ENCODE measurements at regions of chr1 and their contacts with region 1.

Region 1: GRCh38 chr1:224356685-224357625 is at the start of gene CNIH4:
- DNase-seq: peak; percentile 88
- ATAC-seq: peak; percentile 99
- H3K4me3 Mint-ChIP-seq: peak within 1 kb of the TSS; percentile 88
- H3K27ac Mint-ChIP-seq: peak within 1 kb of the TSS; percentile 86
- H3K4me1 Mint-ChIP-seq: peaks cover 34% of the 10 kb centered on the region
- H3K27me3 Mint-ChIP-seq: no peaks in the 10 kb centered on the region
- total RNA-seq, gene CNIH4: 42.3 to 43.1 TPM

Region 2: GRCh38 chr1:224377676-224378006 is 20.7 kb after region 1 on chr1:
- POLR2A ChIA-PET with region 1: interaction called, 28 read pairs
- DNase-seq: no peak
- ATAC-seq: peak; percentile 53
- H3K4me3 Mint-ChIP-seq: peak overlapping the region; percentile 43
- H3K27ac Mint-ChIP-seq: peak overlapping the region; percentile 90
- H3K4me1 Mint-ChIP-seq: peaks cover 82% of the 10 kb centered on the region
- H3K27me3 Mint-ChIP-seq: no peaks in the 10 kb centered on the region

Region 3: GRCh38 chr1:224434691-224435317 is 77.8 kb after region 1 on chr1 and contains the start of gene WDR26:
- POLR2A ChIA-PET with region 1: interaction called, 17 read pairs
- DNase-seq: peak; percentile 84
- ATAC-seq: peak; percentile 88
- H3K4me3 Mint-ChIP-seq: peak within 1 kb of the TSS; percentile 94
- H3K27ac Mint-ChIP-seq: peak within 1 kb of the TSS; percentile 97
- H3K4me1 Mint-ChIP-seq: peaks cover 45% of the 10 kb centered on the region
- H3K27me3 Mint-ChIP-seq: no peaks in the 10 kb centered on the region
- total RNA-seq, gene WDR26: 90.2 to 92.0 TPM

Region 4: GRCh38 chr1:224592636-224593582 is 236.0 kb after region 1 on chr1:
- POLR2A ChIA-PET with region 1: no interaction called
- DNase-seq: no peak
- ATAC-seq: peak; percentile 56
- H3K4me3 Mint-ChIP-seq: no peak overlapping the region
- H3K27ac Mint-ChIP-seq: no peak overlapping the region
- H3K4me1 Mint-ChIP-seq: peaks cover 12% of the 10 kb centered on the region
- H3K27me3 Mint-ChIP-seq: peaks cover 2% of the 10 kb centered on the region